Naive thymus-derived CD8-positive, alpha-beta T cell (primary cell): ENCODE measurements at regions of chr5 and their contacts with region 1.

Region 1: GRCh38 chr5:134345996-134346395 is 21.0 kb downstream of the CDKL3 start:
- DNase-seq: no peak
- ATAC-seq: no peak
- H3K4me3 Mint-ChIP-seq: no peak overlapping the region
- H3K27ac Mint-ChIP-seq: peak overlapping the region in 1 of 10 donors; percentile 84
- H3K4me1 Mint-ChIP-seq: peaks cover 0 to 1% (median 0%) of the 10 kb centered on the region in 4 donors
- H3K27me3 Mint-ChIP-seq: no peaks in the 10 kb centered on the region

Region 2: DNA sequence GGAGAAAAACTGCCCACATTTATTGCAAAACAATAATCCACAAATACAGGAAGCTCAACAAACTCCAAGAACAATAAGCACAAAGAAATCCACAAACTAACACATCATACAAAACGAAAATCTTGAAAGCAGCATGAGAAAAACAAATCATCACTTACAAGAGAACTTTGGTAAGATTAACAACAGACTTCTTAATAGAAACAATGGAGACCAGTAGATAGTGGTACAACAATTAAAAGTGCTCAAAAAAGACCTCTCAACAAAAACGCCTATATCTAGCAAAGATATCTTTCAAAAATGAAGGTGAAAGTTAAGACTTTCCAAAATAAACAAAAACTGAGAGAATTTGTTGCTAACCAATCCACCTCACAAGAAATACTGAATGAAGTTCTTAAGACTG is 17.4 kb before region 1 on chr5:
- POLR2A ChIA-PET with region 1: interaction called, 10 read pairs
- DNase-seq: no peak
- ATAC-seq: no peak
- H3K4me3 Mint-ChIP-seq: no peak overlapping the region
- H3K27ac Mint-ChIP-seq: no peak overlapping the region
- H3K4me1 Mint-ChIP-seq: no peaks in the 10 kb centered on the region
- H3K27me3 Mint-ChIP-seq: no peaks in the 10 kb centered on the region